ENCODE measurements at regions of chr3 and their contacts with region 1.

Region 1: DNA sequence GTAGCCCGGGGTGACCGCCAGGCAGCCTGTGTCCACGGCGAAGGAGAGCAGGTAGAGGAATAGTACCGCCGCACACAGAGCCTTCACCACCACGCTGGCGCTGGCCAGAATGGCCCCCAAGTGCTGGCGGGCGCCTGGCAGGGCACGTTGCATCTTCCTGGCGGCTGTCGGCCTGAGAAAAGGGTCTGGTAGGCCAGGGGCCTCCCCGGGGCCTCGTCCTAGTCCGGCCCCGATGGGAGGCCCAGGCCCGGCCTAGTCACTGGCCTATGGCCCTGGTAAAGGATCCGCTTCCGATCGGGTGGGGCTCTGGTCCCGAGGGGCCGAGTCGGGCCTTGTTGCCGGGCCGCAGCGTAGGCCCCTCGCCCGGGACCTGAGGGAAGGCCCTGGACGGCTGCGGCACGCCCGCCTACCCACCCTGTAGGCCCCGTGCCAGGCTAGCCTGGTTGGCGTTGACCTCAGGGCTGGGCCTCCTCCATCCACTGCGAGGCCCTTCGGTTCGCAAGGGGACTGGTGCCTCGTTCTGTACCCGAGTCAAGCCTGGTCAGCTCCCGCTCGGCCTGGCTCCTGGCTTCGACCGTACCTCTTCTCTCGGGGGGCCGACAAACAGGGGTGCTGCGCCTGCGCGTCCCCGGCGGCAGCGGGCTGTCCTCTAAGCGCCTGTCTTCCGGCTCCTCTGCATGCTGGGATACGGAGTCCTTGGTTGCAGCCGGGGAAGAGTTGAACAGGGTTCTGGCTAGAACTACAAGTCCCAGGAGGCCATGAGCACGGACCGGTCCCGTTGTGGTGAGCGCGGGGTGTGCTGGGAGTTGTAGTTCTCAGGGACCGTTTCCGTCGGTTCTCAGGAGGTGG is at the start of gene TMEM115:
- DNase-seq: peak; percentile 96 to 99 (median 99)
- ATAC-seq: peak; percentile 97 to 99 (median 98)
- H3K4me3 ChIP-seq: peak within 1 kb of the TSS; percentile 60 to 97 (median 80)
- H3K27ac ChIP-seq: peak within 1 kb of the TSS; percentile 77 to 97 (median 90)
- H3K4me1 ChIP-seq: peaks cover 19 to 51% (median 40%) of the 10 kb centered on the region in 12 donors
- H3K27me3 ChIP-seq: no peaks in the 10 kb centered on the region
- CTCF ChIP-seq: no peak
- POLR2A ChIP-seq: peak in 1 of 2 donors; percentile 73
- total RNA-seq, gene TMEM115: 20.5 to 56.4 (median 28.9) TPM

Region 2: GRCh38 chr3:51967384-51968169 is 1608.4 kb after region 1 on chr3 and contains the start of gene PCBP4:
- intact Hi-C with region 1: loop called in 1 of 10 experiments (anchors 10 kb)
- DNase-seq: peak; percentile 84 to 89 (median 87)
- ATAC-seq: peak; percentile 67 to 75 (median 70)
- H3K4me3 ChIP-seq: peak within 1 kb of the TSS; percentile 72 to 97 (median 84)
- H3K27ac ChIP-seq: peak within 1 kb of the TSS; percentile 83 to 98 (median 96)
- H3K4me1 ChIP-seq: peaks cover 3 to 82% (median 39%) of the 10 kb centered on the region in 12 donors
- H3K27me3 ChIP-seq: no peaks in the 10 kb centered on the region
- CTCF ChIP-seq: peak in 2 of 12 donors; percentile 3 to 8
- POLR2A ChIP-seq: peak in 1 of 2 donors; percentile 74
- total RNA-seq, gene PCBP4: 55.4 to 149 (median 63.9) TPM

Measured in heart left ventricle (tissue), 16 donors.